Heart right ventricle (tissue), 16 donors: ENCODE measurements at regions of chr3 and their contacts with region 1.

Region 1: DNA sequence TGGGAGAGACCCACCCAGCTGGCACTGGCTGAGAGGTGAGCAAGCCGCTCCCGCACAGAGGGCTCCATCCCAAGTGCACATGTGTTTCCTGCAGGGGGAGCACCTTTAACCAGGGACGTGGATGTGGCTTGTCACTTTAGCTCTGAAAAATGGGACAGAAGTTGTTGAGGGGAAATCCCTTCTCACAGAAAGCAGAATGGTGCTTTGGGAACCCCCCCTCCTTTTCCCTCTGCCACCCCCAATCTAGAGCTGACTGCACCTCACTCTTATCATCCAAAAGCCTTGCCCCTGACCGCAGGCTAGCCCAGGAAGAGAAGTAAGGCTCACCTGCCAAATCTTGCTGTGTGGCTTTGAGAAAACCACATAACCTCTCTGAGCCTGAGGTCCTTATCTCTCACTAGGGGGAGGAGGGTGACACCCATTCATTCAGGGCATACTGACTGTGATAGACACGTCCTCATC is 77.9 kb downstream of the RPN1 start:
- DNase-seq: no peak
- ATAC-seq: no peak
- H3K4me3 ChIP-seq: no peak overlapping the region
- H3K27ac ChIP-seq: no peak overlapping the region
- H3K4me1 ChIP-seq: peaks cover 3 to 61% (median 39%) of the 10 kb centered on the region in 9 donors
- H3K27me3 ChIP-seq: peaks cover 0 to 38% (median 10%) of the 10 kb centered on the region in 7 donors
- CTCF ChIP-seq: peak in 6 of 9 donors; percentile 17 to 34 (median 24)

Region 2: DNA sequence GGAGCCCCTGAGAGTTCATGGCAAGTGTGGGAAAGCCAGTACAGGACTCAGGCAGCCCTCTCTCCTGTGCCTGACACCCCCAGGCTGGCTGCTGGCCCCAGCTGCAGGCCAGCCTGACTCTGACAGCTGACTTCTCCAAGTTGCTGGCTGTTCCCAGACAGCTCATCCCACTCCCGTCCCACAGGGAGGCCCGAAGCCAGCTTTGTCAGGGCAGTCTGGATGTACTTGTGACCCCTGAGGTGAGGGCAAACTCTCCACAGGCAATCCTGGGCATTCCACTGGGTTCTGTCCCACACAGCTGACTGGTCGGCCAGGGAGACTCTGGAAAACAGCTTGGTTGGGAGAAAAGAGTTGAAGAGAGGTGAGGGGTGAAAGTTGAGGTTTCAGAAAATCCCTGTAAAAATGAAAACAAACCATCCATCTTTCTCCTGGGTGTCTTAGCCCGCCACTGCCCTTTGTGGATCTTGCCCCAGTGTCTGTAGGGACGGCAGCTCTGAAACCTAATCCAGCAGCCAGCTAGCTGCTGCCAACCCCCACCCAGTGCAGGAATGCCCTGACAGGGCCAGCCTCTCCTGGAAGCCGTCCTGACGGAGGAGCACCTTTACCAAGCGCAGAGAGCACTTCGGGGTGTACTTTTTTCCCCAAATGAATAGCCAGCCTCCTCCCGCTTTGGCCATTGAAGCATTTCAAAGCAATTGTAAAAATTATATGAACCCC is 193.9 kb before region 1 on chr3:
- intact Hi-C with region 1: no loop called
- DNase-seq: peak; percentile 47 to 52
- ATAC-seq: peak; percentile 15 to 77 (median 60)
- H3K4me3 ChIP-seq: no peak overlapping the region
- H3K27ac ChIP-seq: peak overlapping the region; percentile 52 to 85 (median 72)
- H3K4me1 ChIP-seq: peaks cover 15 to 57% (median 38%) of the 10 kb centered on the region in 9 donors
- H3K27me3 ChIP-seq: no peaks in the 10 kb centered on the region
- CTCF ChIP-seq: no peak

Region 3: GRCh38 chr3:128482666-128483656 is 89.7 kb before region 1 on chr3:
- intact Hi-C with region 1: loop called in 4 of 10 experiments (anchors 2 to 5 kb)
- DNase-seq: peak in 1 of 2 donors; percentile 73
- ATAC-seq: peak; percentile 11 to 56 (median 45)
- H3K4me3 ChIP-seq: peak overlapping the region; percentile 23 to 85 (median 67)
- H3K27ac ChIP-seq: peak overlapping the region; percentile 38 to 98 (median 93)
- H3K4me1 ChIP-seq: peaks cover 6 to 91% (median 61%) of the 10 kb centered on the region in 9 donors
- H3K27me3 ChIP-seq: peaks cover 0 to 90% (median 67%) of the 10 kb centered on the region in 7 donors
- CTCF ChIP-seq: peak in 5 of 9 donors; percentile 6 to 52 (median 26)

Region 4: DNA sequence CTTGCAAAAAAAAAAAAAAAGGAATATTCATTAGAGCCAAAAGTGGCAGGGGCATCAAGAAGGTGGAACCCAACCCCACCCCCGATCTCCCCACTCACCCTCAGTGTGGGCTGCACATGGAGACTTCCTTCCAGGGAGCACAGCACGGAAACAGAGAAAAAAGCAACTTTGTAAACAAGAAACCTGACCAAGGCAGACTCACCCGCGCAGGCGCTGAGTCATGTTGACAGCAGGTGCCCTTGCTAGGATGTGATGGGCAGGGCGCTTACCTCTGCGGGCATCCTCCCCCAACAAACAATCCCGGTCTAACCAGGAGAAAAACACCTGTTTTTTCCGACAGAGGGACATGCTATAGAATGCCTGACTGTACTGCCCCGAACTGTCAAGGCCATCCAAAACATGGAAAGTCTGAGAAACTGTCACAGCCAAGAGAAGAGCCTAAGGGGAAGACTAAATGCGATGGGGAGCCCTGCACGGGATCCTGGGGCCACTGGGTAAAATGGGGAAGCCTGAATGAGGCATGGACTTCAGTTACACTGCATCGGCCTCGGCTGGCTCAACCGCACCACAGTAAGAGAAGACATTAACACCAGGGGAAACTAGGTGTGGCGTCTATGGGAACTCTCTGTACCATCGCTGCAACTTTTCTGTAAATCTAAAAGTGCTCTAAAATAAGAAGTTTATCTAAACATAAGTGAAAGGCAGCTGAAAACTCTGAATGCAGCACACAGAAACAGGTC is 13.0 kb before region 1 on chr3:
- intact Hi-C with region 1: loop called in 2 of 10 experiments (anchors 1 to 2 kb)
- DNase-seq: no peak
- ATAC-seq: no peak
- H3K4me3 ChIP-seq: no peak overlapping the region
- H3K27ac ChIP-seq: no peak overlapping the region
- H3K4me1 ChIP-seq: peaks cover 4 to 30% (median 18%) of the 10 kb centered on the region in 9 donors
- H3K27me3 ChIP-seq: peaks cover 5 to 56% (median 30%) of the 10 kb centered on the region in 7 donors
- CTCF ChIP-seq: no peak

Region 5: DNA sequence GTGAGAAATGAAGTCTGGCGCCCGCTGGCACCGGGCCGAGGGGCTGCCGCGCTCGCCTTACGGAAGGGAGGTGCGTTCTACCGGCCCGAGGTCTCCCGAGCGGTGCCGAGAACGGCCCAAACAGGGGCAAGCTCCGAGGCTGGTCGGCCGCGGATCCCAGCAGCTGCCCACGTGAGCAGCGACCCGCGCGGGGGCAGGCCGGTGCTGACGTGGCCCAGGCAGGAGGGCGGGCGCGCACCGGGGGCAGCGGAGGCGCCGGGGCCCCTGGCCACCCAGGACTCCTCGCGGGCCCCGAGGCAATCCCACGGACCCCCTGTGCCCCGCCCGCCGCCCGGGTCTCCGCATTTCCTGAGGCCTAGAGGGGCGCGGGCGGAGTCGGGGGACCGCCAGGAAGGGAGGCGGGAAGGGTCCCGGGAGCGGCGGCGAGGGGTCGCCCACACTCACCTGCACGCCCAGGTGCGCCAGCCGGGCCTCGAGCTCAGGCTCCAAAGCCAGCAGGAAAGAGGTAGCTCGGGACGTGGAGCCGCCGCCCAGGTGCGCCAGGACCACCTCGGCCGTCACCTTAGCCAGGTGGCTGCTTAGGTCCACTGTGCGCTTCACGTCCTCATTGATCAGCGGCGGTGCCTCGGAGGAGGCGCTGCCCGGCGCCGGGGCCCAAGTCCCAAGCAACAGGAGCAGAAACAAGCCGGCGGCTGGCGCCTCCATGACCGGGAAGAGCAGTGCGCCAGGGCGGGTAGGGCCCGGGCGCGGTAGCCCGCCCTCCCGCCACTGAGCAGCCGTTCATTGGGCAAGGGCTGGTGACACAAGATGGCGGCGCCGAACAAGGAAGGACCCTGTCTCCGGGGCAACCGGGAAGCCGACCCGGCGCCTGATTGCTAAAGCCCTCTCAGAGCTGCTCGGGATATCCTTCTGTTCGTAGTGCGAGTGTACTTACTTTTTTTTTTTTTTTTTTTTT is 77.7 kb after region 1 on chr3 and contains the start of gene RPN1:
- intact Hi-C with region 1: no loop called
- DNase-seq: peak; percentile 96 to 97
- ATAC-seq: peak; percentile 99 to 100 (median 100)
- H3K4me3 ChIP-seq: peak within 1 kb of the TSS; percentile 75 to 100 (median 97)
- H3K27ac ChIP-seq: peak within 1 kb of the TSS; percentile 93 to 99 (median 98)
- H3K4me1 ChIP-seq: peaks cover 3 to 34% (median 20%) of the 10 kb centered on the region in 9 donors
- H3K27me3 ChIP-seq: no peaks in the 10 kb centered on the region
- CTCF ChIP-seq: no peak
- total RNA-seq, gene RPN1: 74.9 to 170 (median 83.6) TPM